ENCODE measurements at regions of chr13 and their contacts with region 1.

Region 1: DNA sequence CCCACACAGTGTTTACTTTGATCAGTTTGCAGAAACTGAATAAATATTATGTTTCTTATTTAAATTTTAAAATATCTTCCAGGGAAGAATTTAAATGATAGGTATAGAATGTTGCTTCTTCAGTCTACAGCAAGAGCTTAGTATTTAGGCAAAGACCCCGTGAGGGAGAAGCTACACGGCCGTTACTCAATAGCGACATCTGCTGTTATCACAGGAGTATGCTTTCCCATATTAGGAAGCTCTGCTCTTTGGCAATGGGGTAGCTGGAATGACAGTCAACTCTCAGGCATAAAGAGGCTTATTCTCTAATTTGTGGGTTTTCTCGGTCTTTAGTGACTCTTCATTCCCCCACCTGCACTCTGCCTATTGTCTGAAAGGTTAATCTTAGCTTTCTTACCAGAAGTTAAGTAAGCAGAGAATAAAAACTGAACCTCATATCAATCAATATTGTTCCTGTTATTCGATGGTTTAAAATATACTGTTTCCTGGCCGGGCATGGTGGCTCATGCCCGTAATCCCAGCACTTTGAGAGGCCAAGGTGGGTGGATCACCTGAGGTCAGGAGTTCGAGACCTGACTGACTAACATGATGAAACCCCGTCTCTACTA is 13.2 kb upstream of the LHFPL6 start:
- DNase-seq: peak; percentile 49
- H3K4me3 ChIP-seq: no peak overlapping the region
- H3K27ac ChIP-seq: no peak overlapping the region
- H3K4me1 ChIP-seq: no peaks in the 10 kb centered on the region
- H3K27me3 ChIP-seq: no peaks in the 10 kb centered on the region
- CTCF ChIP-seq: peak; percentile 78

Region 2: GRCh38 chr13:39051157-39051556 is 565.0 kb before region 1 on chr13:
- intact Hi-C with region 1: loop called (anchors 5 kb)
- DNase-seq: no peak
- H3K4me3 ChIP-seq: no peak overlapping the region
- H3K27ac ChIP-seq: no peak overlapping the region
- H3K4me1 ChIP-seq: no peaks in the 10 kb centered on the region
- H3K27me3 ChIP-seq: no peaks in the 10 kb centered on the region
- CTCF ChIP-seq: no peak

Region 3: GRCh38 chr13:39144941-39145533 is 471.2 kb before region 1 on chr13:
- intact Hi-C with region 1: loop called (anchors 5 kb)
- DNase-seq: peak; percentile 52
- H3K4me3 ChIP-seq: no peak overlapping the region
- H3K27ac ChIP-seq: no peak overlapping the region
- H3K4me1 ChIP-seq: no peaks in the 10 kb centered on the region
- H3K27me3 ChIP-seq: no peaks in the 10 kb centered on the region
- CTCF ChIP-seq: peak; percentile 52

Region 4: GRCh38 chr13:39273953-39274738 is 342.0 kb before region 1 on chr13:
- intact Hi-C with region 1: loop called (anchors 2 kb)
- DNase-seq: peak; percentile 27
- H3K4me3 ChIP-seq: no peak overlapping the region
- H3K27ac ChIP-seq: no peak overlapping the region
- H3K4me1 ChIP-seq: no peaks in the 10 kb centered on the region
- H3K27me3 ChIP-seq: no peaks in the 10 kb centered on the region
- CTCF ChIP-seq: no peak

Measured in colonic mucosa (tissue), 4 donors.